Ovary (tissue), 10 donors: ENCODE measurements at regions of chr14 and their contacts with region 1.

Region 1: GRCh38 chr14:55314449-55314848 is 43.2 kb downstream of the FBXO34 start:
- DNase-seq: no peak
- H3K4me3 ChIP-seq: no peak overlapping the region
- H3K27ac ChIP-seq: no peak overlapping the region
- H3K4me1 ChIP-seq: no peaks in the 10 kb centered on the region
- H3K27me3 ChIP-seq: no peaks in the 10 kb centered on the region
- CTCF ChIP-seq: no peak
- EP300 ChIP-seq: no peak
- POLR2A ChIP-seq: no peak

Region 2: GRCh38 chr14:55240526-55241178 is 73.8 kb before region 1 on chr14:
- intact Hi-C with region 1: loop called in 1 of 4 experiments (anchors 2 kb)
- DNase-seq: no peak
- H3K4me3 ChIP-seq: no peak overlapping the region
- H3K27ac ChIP-seq: no peak overlapping the region
- H3K4me1 ChIP-seq: no peaks in the 10 kb centered on the region
- H3K27me3 ChIP-seq: no peaks in the 10 kb centered on the region
- CTCF ChIP-seq: no peak
- EP300 ChIP-seq: no peak
- POLR2A ChIP-seq: no peak